Activated CD4-positive, alpha-beta T cell treated with anti-CD3 and anti-CD28 coated beads, Interleukin-2, amount 10 ng/mL, durations not matched to agents 24 days and 14 days (primary cell): ENCODE measurements at regions of chr14 and their contacts with region 1.

Region 1: GRCh38 chr14:97380539-97380941 is 583.4 kb downstream of the VRK1 start:
- DNase-seq: peak; percentile 74
- H3K4me3 Mint-ChIP-seq: peak overlapping the region; percentile 33
- H3K27ac Mint-ChIP-seq: peak overlapping the region; percentile 78
- H3K4me1 Mint-ChIP-seq: peaks cover 43% of the 10 kb centered on the region
- H3K27me3 Mint-ChIP-seq: no peaks in the 10 kb centered on the region

Region 2: DNA sequence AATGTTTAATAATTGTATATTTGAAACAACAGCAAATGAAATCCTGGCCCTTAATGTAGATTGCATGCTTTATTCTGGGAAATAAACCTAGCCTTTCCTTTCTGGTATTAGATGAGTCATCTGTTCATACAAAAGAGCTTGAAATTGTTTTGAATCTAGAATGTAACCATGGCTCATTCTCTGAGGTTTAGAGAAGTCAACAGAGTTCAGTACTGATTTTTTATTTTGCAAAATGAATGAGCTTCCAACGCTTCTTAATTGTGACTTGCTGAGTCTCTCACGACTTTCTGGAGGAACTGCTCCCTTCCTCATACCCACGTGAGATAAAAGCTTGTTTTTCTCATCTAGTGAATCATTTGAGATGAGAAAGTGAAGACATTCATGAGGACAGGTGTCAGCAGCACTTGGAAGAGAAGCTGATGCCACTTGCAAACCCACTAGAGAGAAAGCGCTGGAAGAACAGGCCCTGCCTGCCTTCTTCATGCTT is 73.7 kb before region 1 on chr14:
- intact Hi-C with region 1: loop called (anchors 5 kb)
- DNase-seq: peak; percentile 65
- H3K4me3 Mint-ChIP-seq: peak overlapping the region; percentile 20
- H3K27ac Mint-ChIP-seq: peak overlapping the region; percentile 86
- H3K4me1 Mint-ChIP-seq: peaks cover 28% of the 10 kb centered on the region
- H3K27me3 Mint-ChIP-seq: no peaks in the 10 kb centered on the region

Region 3: GRCh38 chr14:97359341-97359740 is 21.2 kb before region 1 on chr14:
- intact Hi-C with region 1: no loop called
- DNase-seq: no peak
- H3K4me3 Mint-ChIP-seq: no peak overlapping the region
- H3K27ac Mint-ChIP-seq: no peak overlapping the region
- H3K4me1 Mint-ChIP-seq: no peaks in the 10 kb centered on the region
- H3K27me3 Mint-ChIP-seq: peaks cover 4% of the 10 kb centered on the region

Region 4: DNA sequence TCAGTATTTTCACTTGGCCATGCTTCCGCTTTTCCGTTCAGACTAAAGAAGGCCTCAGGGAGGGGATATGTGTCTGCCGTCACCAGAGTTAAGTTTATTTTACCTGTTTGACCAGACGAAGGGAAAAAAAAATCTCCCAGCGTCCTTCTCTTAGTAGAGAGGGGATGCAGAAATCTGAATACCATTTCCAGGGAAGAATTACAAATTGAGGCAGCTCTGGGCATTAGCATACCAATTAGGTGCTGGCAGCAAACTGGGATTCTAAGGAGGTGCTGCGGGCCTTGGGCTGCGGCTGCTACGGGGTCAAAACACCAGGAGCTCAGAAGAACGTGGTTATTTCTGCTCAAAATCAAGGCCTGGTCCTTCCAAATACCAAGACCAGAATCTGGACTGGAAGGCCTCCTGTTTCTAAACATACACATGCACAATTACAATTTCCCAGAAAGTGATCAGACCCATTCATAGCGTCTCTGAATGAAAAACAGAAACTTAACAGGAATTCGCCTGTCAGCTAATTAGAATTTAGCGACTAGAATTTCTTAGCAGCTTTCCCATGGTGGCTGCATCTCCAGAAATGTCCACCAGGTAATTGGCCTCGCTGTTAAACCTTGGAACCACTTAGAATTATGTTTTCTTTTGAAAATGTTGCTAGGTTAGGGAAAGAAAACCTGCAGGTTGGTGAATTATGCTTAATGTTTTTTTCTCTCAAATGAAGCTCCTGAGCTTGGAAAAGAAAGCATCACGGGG is 33.6 kb after region 1 on chr14:
- intact Hi-C with region 1: no loop called
- DNase-seq: no peak
- H3K4me3 Mint-ChIP-seq: no peak overlapping the region
- H3K27ac Mint-ChIP-seq: no peak overlapping the region
- H3K4me1 Mint-ChIP-seq: peaks cover 14% of the 10 kb centered on the region
- H3K27me3 Mint-ChIP-seq: peaks cover 10% of the 10 kb centered on the region

Region 5: DNA sequence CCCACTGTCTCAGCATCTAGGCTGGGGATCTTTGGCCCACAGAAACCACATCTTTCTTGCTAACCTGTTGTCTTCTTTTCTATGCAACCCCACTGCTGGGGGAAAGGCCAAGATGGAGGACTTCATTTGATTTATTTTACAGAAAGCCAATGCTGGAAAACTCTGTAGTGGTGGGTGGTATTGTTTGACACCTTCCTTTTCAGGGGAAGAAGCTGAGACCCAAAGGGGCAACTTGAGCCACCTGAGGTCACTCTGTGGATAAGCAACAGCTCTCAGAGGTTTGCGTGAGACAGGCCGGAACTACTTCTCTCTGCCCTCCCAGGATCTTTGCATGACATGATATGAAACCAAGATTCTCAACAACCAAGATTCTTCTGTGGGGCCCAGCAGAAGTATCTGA is 61.8 kb after region 1 on chr14:
- intact Hi-C with region 1: loop called (anchors 1 kb)
- DNase-seq: peak; percentile 78
- H3K4me3 Mint-ChIP-seq: peak overlapping the region; percentile 40
- H3K27ac Mint-ChIP-seq: peak overlapping the region; percentile 92
- H3K4me1 Mint-ChIP-seq: peaks cover 26% of the 10 kb centered on the region
- H3K27me3 Mint-ChIP-seq: no peaks in the 10 kb centered on the region

Region 6: GRCh38 chr14:97602438-97603117 is 222.0 kb after region 1 on chr14:
- intact Hi-C with region 1: loop called (anchors 10 kb)
- DNase-seq: peak; percentile 90
- H3K4me3 Mint-ChIP-seq: no peak overlapping the region
- H3K27ac Mint-ChIP-seq: no peak overlapping the region
- H3K4me1 Mint-ChIP-seq: peaks cover 31% of the 10 kb centered on the region
- H3K27me3 Mint-ChIP-seq: no peaks in the 10 kb centered on the region